GM12878 (cell line): ENCODE measurements at regions of chr3 and their contacts with region 1.

Region 1: GRCh38 chr3:45656575-45657363 is 32.4 kb upstream of the SACM1L start:
- DNase-seq: peak; percentile 76
- ATAC-seq: peak; percentile 88
- H3K4me3 ChIP-seq: no peak overlapping the region
- H3K27ac ChIP-seq: peak overlapping the region; percentile 57
- H3K4me1 ChIP-seq: peaks cover 33% of the 10 kb centered on the region
- H3K27me3 ChIP-seq: no peaks in the 10 kb centered on the region
- CTCF ChIP-seq: peak; percentile 83 to 93 (median 92)
- EP300 ChIP-seq: no peak
- POLR2A ChIP-seq: no peak
- RAD21 ChIP-seq: peak; percentile 93

Region 2: DNA sequence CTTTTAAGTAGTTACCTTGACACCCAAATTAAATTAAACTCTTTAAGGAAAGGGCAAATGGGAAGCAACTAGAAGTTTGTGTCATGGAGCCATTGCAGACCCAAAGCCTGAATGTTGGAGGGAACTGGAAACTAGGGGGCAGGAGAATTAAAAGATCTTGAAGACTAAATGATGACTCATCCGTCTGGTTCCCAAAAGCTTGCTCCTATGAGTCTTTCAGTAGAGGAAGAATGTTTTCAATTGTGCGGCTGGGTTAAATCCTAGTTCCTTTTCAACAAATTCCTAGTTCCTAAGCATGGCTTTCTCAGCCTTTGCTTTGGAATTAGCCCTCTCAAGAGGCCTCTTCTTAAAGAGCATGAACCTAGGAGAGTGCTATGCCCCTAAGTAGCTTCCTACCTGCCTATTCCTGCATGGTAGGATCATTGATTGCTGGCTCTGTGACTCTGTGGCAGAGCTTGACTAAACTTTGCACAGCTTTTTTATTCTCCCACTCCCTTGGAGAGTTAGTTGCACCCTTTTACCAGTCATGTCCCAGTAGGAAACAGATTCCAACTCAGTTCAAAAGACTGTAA is 613.0 kb before region 1 on chr3:
- CTCF ChIA-PET with region 1: interaction called, 51 read pairs
- POLR2A ChIA-PET with region 1: no interaction called
- RAD21 ChIA-PET with region 1: interaction called, 16 read pairs
- SMC1A ChIA-PET with region 1: interaction called, 15 read pairs
- in situ Hi-C with region 1: loop called (anchors 5 kb)
- intact Hi-C with region 1: loop called (anchors 5 kb)
- DNase-seq: no peak
- ATAC-seq: no peak
- H3K4me3 ChIP-seq: no peak overlapping the region
- H3K27ac ChIP-seq: no peak overlapping the region
- H3K4me1 ChIP-seq: peaks cover 12% of the 10 kb centered on the region
- H3K27me3 ChIP-seq: no peaks in the 10 kb centered on the region
- CTCF ChIP-seq: no peak
- EP300 ChIP-seq: no peak
- POLR2A ChIP-seq: no peak
- RAD21 ChIP-seq: no peak

Region 3: DNA sequence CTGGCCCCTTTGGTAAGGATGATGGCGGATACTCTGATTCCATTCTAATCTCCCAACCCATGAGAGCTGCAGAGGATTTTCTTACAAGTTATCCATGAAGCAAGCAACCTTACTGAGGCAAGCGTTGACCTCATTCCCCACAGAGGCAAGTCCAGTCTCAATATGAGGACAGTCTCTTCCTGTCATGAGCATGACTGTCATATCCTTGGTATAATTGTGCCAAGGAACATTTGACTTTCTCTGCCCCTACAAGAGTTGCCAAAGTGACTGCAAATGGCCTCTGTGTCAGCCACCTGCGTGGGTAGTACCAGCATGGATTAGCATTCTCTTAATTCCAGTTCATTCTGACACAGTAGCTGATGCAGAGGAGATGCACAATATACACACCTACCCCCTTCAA is 359.4 kb before region 1 on chr3:
- CTCF ChIA-PET with region 1: no interaction called
- POLR2A ChIA-PET with region 1: no interaction called
- RAD21 ChIA-PET with region 1: no interaction called
- SMC1A ChIA-PET with region 1: no interaction called
- in situ Hi-C with region 1: no loop called
- intact Hi-C with region 1: no loop called
- DNase-seq: no peak
- ATAC-seq: no peak
- H3K4me3 ChIP-seq: no peak overlapping the region
- H3K27ac ChIP-seq: no peak overlapping the region
- H3K4me1 ChIP-seq: no peaks in the 10 kb centered on the region
- H3K27me3 ChIP-seq: peaks cover 2 to 3% of the 10 kb centered on the region in 2 experiments; a peak in 2 of 4 replicates
- CTCF ChIP-seq: no peak
- EP300 ChIP-seq: no peak
- POLR2A ChIP-seq: no peak
- RAD21 ChIP-seq: no peak

Region 4: GRCh38 chr3:45516829-45517228 is 139.9 kb before region 1 on chr3:
- CTCF ChIA-PET with region 1: interaction called, 259 read pairs
- POLR2A ChIA-PET with region 1: interaction called, 7 read pairs
- RAD21 ChIA-PET with region 1: interaction called, 63 read pairs
- SMC1A ChIA-PET with region 1: interaction called, 55 read pairs
- in situ Hi-C with region 1: loop called (anchors 5 kb)
- intact Hi-C with region 1: no loop called
- DNase-seq: no peak
- ATAC-seq: no peak
- H3K4me3 ChIP-seq: no peak overlapping the region
- H3K27ac ChIP-seq: no peak overlapping the region
- H3K4me1 ChIP-seq: no peaks in the 10 kb centered on the region
- H3K27me3 ChIP-seq: no peaks in the 10 kb centered on the region
- CTCF ChIP-seq: no peak
- EP300 ChIP-seq: no peak
- POLR2A ChIP-seq: no peak
- RAD21 ChIP-seq: no peak

Region 5: GRCh38 chr3:45553996-45554666 is 102.6 kb before region 1 on chr3:
- CTCF ChIA-PET with region 1: interaction called, 36 read pairs
- POLR2A ChIA-PET with region 1: no interaction called
- RAD21 ChIA-PET with region 1: interaction called, 12 read pairs
- SMC1A ChIA-PET with region 1: interaction called, 8 read pairs
- in situ Hi-C with region 1: no loop called
- intact Hi-C with region 1: no loop called
- DNase-seq: peak; percentile 68
- ATAC-seq: peak; percentile 78
- H3K4me3 ChIP-seq: no peak overlapping the region
- H3K27ac ChIP-seq: peak overlapping the region; percentile 55
- H3K4me1 ChIP-seq: peaks cover 33% of the 10 kb centered on the region
- H3K27me3 ChIP-seq: no peaks in the 10 kb centered on the region
- CTCF ChIP-seq: no peak
- EP300 ChIP-seq: peak; percentile 82 to 84; a peak in 3 of 4 replicates
- POLR2A ChIP-seq: no peak
- RAD21 ChIP-seq: no peak

Region 6: GRCh38 chr3:45612918-45613602 is 43.7 kb before region 1 on chr3:
- CTCF ChIA-PET with region 1: interaction called, 60 read pairs
- POLR2A ChIA-PET with region 1: interaction called, 11 read pairs
- RAD21 ChIA-PET with region 1: interaction called, 12 read pairs
- SMC1A ChIA-PET with region 1: interaction called, 22 read pairs
- in situ Hi-C with region 1: no loop called
- intact Hi-C with region 1: loop called (anchors 5 kb)
- DNase-seq: peak; percentile 91
- ATAC-seq: peak; percentile 85
- H3K4me3 ChIP-seq: peak overlapping the region; percentile 15; the same call in 1 of the 2 replicates
- H3K27ac ChIP-seq: peak overlapping the region; percentile 63
- H3K4me1 ChIP-seq: peaks cover 45% of the 10 kb centered on the region
- H3K27me3 ChIP-seq: no peaks in the 10 kb centered on the region
- CTCF ChIP-seq: no peak
- EP300 ChIP-seq: peak; percentile 39 to 62; a peak in 1 of 4 replicates
- POLR2A ChIP-seq: no peak
- RAD21 ChIP-seq: peak; percentile 33

Region 7: DNA sequence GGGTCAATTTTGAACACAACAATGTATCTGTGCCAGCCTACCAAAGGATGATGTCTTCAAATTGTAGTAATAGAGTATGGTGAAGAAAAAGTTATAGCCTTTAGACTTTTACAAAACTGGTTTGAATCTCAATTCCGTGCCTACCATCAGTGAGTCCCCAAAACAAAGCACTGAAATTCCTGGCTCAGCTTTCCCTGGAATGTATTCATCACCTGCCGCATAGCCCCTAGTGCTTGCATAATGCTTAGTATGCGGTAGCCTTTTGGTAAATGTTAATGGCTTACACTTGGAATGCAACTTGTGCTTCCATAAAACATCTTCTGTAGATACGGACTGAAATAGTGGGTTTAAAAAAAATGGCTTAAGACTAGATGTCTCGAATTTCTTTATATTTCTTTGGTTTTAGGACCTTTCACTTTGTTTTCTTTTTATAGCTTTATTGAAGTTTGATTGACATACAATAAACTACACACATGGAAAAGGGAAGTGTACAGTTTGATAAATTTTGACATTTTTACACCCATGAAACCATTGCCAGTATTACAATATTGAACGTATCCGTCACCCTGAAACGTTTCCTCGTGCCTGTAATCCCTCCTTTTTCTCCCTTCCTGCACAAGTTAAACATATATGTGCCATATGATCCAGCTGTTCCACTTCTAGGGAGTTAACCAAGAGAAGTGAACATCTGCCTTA is 44.6 kb after region 1 on chr3:
- CTCF ChIA-PET with region 1: interaction called, 23 read pairs
- POLR2A ChIA-PET with region 1: no interaction called
- RAD21 ChIA-PET with region 1: interaction called, 5 read pairs
- SMC1A ChIA-PET with region 1: interaction called, 7 read pairs
- in situ Hi-C with region 1: no loop called
- intact Hi-C with region 1: no loop called
- DNase-seq: no peak
- ATAC-seq: no peak
- H3K4me3 ChIP-seq: no peak overlapping the region
- H3K27ac ChIP-seq: no peak overlapping the region
- H3K4me1 ChIP-seq: no peaks in the 10 kb centered on the region
- H3K27me3 ChIP-seq: no peaks in the 10 kb centered on the region
- CTCF ChIP-seq: no peak
- EP300 ChIP-seq: no peak
- POLR2A ChIP-seq: no peak
- RAD21 ChIP-seq: no peak